Transverse colon (tissue), 4 donors: ENCODE measurements at regions of chr21 and their contacts with region 1.

Region 1: DNA sequence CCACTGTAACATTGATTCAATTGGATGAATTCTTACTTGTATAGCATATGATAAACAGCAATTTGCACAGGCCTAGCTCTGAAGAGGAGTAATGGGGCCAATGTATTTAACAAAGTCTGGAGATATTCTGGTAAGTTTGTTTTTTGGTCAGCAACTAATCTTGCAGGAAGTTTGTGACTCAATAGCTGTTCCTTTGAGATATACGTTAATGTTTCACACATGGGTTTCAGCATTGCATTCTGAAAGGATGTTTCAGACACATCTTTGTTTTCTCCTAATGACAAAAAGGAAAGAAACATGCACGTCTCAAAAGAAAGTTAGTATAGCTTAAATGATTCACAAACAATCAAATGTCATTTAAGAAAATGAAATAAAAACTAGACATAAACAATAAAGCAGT is 49.0 kb downstream of the LTN1 start:
- DNase-seq: no peak
- H3K4me3 ChIP-seq: no peak overlapping the region
- H3K27ac ChIP-seq: no peak overlapping the region
- H3K4me1 ChIP-seq: peaks cover 0 to 3% (median 0%) of the 10 kb centered on the region in 4 donors
- H3K27me3 ChIP-seq: no peaks in the 10 kb centered on the region
- CTCF ChIP-seq: no peak
- EP300 ChIP-seq: no peak
- POLR2A ChIP-seq: no peak

Region 2: DNA sequence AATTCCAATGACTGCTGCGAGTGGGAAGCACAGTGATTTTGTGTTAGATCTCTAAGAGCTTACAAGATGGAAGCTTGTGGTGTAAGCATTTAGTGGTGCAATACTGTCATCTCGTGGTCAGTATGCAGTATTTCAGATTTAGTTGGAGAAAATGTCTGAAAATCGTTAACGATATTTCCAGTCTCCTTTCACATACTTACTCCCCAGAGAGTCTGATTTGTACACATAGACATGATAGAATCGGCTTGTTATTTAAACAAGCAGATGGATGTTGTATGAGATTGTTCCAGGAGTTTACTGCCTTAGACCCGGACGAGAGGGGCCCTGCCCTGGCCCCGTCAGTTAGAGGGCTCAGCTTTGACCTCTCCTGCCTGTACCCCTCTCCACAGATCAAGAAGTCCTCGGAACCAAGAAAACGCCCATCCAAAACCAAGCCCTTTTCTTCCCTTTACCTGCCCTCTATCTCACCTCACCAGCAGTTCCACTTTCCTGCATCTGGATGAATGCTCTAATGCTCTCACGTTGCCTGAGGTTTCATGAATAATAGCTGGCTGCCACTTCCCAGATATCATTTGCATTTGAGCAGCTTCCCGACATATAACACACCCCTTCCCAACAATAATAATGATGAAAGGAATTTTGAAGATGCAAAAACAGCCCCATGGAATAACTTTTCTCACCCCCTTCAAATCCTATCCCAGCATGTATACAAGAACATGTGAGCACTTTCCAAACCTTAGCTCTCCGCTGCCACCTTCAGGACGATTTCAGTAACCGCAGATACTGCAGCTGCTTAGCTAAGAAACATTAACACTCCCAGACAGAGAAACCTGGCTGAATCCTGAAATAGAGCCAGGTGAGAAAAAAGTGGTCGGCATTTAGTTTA is 198.3 kb before region 1 on chr21:
- in situ Hi-C with region 1: loop called in 2 of 4 experiments (anchors 10 kb)
- intact Hi-C with region 1: no loop called
- DNase-seq: peak; percentile 78
- H3K4me3 ChIP-seq: peak overlapping the region; percentile 17 to 58 (median 36)
- H3K27ac ChIP-seq: peak overlapping the region; percentile 48 to 70 (median 62)
- H3K4me1 ChIP-seq: peaks cover 0 to 9% (median 2%) of the 10 kb centered on the region in 4 donors
- H3K27me3 ChIP-seq: no peaks in the 10 kb centered on the region
- CTCF ChIP-seq: peak; percentile 88 to 99 (median 93)
- EP300 ChIP-seq: no peak
- POLR2A ChIP-seq: no peak

Region 3: DNA sequence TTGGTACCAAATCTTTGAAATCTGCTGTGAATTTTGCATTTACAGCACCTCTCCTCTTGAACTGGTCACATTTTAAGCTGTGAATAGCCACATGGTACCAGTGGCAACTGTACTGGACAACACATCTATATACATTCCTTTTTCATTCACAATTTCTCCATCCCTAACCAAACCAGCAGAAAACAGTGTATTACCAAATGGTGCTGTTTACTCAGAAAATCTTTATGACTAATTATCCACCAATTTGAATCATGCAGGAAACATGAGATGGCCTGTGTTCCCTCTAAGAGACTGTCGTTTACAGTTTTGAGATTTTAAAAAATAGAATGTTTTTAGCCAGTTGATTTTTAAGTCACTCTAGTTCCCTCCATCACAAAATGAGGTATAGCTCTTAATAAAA is 147.4 kb after region 1 on chr21:
- in situ Hi-C with region 1: no loop called
- intact Hi-C with region 1: no loop called
- DNase-seq: no peak
- H3K4me3 ChIP-seq: no peak overlapping the region
- H3K27ac ChIP-seq: no peak overlapping the region
- H3K4me1 ChIP-seq: peaks cover 0 to 7% (median 1%) of the 10 kb centered on the region in 4 donors
- H3K27me3 ChIP-seq: no peaks in the 10 kb centered on the region
- CTCF ChIP-seq: no peak
- EP300 ChIP-seq: no peak
- POLR2A ChIP-seq: no peak

Region 4: DNA sequence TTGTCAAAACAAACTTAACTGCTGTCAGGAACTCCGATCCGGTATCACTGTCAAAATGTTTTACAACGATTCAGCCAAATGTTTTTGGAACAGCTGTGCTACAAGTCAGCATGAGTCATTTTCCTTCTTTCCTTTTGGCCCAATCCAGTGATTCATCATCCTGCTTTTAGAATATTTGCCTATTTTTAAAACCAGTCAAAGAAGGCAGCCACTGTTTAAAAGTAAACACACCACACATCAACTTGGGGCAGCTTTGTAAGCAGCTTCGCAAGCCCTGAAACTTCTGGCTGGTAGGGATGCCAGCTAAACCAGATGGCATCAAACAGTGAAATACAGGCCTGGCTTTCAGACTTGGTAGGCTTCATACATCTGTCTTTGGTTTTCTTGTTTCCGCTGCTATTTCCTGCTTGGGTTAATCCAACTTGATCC is 201.7 kb after region 1 on chr21:
- in situ Hi-C with region 1: no loop called
- intact Hi-C with region 1: no loop called
- DNase-seq: no peak
- H3K4me3 ChIP-seq: no peak overlapping the region
- H3K27ac ChIP-seq: peak overlapping the region; percentile 45 to 68 (median 56)
- H3K4me1 ChIP-seq: peaks cover 0 to 12% (median 5%) of the 10 kb centered on the region in 4 donors
- H3K27me3 ChIP-seq: no peaks in the 10 kb centered on the region
- CTCF ChIP-seq: no peak
- EP300 ChIP-seq: no peak
- POLR2A ChIP-seq: no peak

Region 5: DNA sequence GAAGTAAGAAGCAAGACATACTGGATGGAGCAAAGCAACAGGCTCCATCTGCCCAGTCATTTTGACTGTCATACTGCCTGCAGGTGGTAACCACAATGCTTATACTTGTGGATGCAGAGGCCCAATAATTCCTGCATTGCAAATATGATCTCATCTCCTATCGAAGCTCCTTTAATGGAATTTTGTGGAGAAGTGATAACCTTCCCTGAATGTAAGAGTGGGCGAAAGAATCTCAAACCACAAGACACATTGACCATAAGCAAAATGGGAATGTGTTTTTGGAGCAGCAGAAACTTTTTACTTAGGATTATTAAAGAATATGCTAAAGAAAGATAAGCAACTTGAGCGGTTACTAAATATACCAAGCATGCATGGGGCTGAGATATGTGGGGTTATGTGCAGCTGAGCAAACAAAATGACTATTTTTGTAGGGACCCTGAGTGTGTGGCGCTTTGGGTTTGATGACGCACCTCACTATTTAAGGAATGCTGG is 277.7 kb after region 1 on chr21:
- in situ Hi-C with region 1: no loop called
- intact Hi-C with region 1: no loop called
- DNase-seq: no peak
- H3K4me3 ChIP-seq: no peak overlapping the region
- H3K27ac ChIP-seq: no peak overlapping the region
- H3K4me1 ChIP-seq: peaks cover 1 to 32% (median 14%) of the 10 kb centered on the region in 4 donors
- H3K27me3 ChIP-seq: no peaks in the 10 kb centered on the region
- CTCF ChIP-seq: no peak
- EP300 ChIP-seq: no peak
- POLR2A ChIP-seq: no peak